Activated CD4-positive, alpha-beta T cell treated with anti-CD3 and anti-CD28 coated beads, Interleukin-2, amount 10 ng/mL, durations not matched to agents 7 days and 5 days (primary cell): ENCODE measurements at regions of chr11 and their contacts with region 1.

Region 1: GRCh38 chr11:117171404-117172061 is 7.0 kb upstream of the SIDT2 start:
- DNase-seq: no peak
- H3K4me3 Mint-ChIP-seq: no peak overlapping the region
- H3K27ac Mint-ChIP-seq: no peak overlapping the region
- H3K4me1 Mint-ChIP-seq: peaks cover 6% of the 10 kb centered on the region
- H3K27me3 Mint-ChIP-seq: no peaks in the 10 kb centered on the region

Region 2: DNA sequence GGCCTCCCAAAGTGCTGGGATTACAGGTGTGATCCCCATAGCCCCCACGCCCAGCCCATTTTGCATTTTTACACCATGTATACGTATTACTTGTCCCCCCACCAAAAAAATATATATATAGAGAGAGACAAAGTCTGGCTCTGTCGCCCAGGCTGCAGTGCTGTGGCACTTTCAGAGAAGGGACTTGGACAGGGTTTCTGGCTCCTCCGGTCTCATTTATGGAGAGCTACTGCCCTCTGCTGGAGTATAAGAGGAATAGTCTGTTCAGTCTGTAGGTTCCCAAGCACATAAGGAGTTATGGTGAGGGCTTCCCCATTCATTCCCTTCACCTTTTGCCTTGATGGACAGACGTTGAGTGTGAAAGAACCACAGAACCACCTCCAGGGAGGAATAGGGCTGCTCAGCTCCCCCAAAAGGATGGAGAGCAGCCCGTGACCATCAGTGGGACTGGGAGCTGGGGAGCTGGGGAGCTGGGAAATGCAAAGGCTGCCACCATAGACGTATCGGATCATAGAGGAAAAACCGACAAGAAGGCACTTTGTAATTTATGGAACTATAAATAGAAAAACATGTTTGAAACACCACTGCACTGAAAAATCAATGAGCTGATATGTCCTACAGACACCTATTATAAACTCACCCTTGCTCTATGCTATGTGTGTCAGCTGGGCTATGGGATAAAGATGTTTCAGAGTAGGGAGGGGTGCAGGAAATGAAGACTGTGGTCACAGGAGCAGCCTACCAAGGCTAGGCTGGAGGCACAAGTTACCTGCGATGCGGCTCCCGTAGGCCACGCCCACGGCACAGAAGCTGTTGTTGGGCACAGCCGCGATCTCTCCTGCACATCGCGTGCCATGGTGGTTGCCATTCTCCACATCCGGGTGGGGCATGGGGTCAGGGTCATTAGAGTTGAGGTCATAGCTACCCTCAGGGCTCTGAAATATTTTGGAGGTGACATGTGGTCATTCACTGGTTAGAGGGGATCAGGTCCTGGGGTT is 55.2 kb after region 1 on chr11:
- CTCF ChIA-PET with region 1: interaction called, 11 read pairs
- POLR2A ChIA-PET with region 1: no interaction called
- DNase-seq: peak; percentile 62
- H3K4me3 Mint-ChIP-seq: no peak overlapping the region
- H3K27ac Mint-ChIP-seq: peak overlapping the region; percentile 71
- H3K4me1 Mint-ChIP-seq: peaks cover 41% of the 10 kb centered on the region
- H3K27me3 Mint-ChIP-seq: no peaks in the 10 kb centered on the region

Region 3: GRCh38 chr11:117239300-117239699 is 67.8 kb after region 1 on chr11:
- CTCF ChIA-PET with region 1: no interaction called
- POLR2A ChIA-PET with region 1: no interaction called
- DNase-seq: no peak
- H3K4me3 Mint-ChIP-seq: no peak overlapping the region
- H3K27ac Mint-ChIP-seq: no peak overlapping the region
- H3K4me1 Mint-ChIP-seq: peaks cover 7% of the 10 kb centered on the region
- H3K27me3 Mint-ChIP-seq: no peaks in the 10 kb centered on the region